ENCODE measurements at regions of chr9 and their contacts with region 1.

Region 1: DNA sequence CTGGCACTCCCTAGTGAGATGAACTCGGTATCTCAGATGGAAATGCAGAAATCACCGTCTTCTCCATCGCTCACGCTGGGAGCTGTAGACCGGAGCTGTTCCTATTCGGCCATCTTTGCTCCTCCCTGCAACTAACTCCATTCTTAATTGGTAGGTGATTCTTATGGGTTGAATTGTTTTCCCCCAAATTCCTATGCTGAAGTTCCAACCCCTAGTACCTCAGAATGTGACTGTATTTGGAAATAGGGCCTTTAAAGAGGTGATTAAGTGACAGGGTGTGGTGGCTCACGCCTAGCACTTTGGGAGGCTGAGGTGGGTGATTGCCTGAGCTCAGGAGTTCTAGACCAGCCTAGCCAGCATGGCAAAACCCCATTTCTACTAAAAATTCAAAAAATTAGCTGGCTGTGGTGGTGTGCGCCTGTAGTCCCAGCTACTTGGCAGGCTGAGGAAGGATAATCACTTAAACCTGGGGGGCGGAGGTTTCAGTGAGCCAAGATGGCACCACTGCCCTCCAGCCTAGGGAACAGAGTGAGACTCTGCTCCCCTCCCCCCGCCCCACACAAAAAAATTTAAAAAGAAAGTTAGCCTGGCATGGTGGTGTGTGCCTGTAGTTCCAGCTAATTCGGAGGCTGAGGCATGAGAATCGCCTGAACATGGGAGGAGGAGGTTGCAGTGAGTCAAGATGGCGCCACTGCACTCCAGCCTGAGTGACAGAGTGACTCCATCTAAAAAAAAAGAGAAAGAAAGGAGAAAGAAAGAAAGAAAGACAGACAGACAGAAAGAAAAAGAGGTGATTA is 25.2 kb upstream of the FOCAD start:
- DNase-seq: no peak
- ATAC-seq: peak; percentile 20
- H3K4me3 ChIP-seq: peak overlapping the region; percentile 27
- H3K4me3 Mint-ChIP-seq: peak overlapping the region in 1 of 10 donors; percentile 85
- H3K27ac ChIP-seq: no peak overlapping the region
- H3K27ac Mint-ChIP-seq: peak overlapping the region in 8 of 9 donors; percentile 69 to 94 (median 84)
- H3K4me1 ChIP-seq: peaks cover 0 to 5% of the 10 kb centered on the region in 2 donors
- H3K4me1 Mint-ChIP-seq: peaks cover 0 to 24% (median 14%) of the 10 kb centered on the region in 7 donors
- H3K27me3 ChIP-seq: no peaks in the 10 kb centered on the region
- H3K27me3 Mint-ChIP-seq: peaks cover 0 to 2% (median 0%) of the 10 kb centered on the region in 5 donors

Region 2: DNA sequence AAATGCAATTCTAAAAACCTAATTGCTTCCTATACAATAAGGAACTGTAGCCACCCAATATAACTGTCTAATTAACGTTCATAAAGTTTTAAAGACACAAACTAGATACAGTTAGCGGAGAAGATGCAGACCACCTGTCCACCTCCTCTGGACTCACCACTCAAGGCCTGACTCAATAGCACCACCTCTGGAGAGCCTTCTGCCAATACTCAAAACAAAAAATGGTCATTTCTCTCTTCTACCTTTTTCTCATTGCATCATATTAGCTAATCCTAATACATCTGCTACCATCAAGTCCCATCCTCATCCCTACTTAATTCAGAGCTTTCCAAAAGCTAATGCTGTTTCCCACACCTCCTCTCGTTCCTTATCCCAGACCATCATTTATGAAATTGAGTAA is 196.5 kb before region 1 on chr9:
- CTCF ChIA-PET with region 1: no interaction called
- POLR2A ChIA-PET with region 1: no interaction called
- intact Hi-C with region 1: no loop called
- DNase-seq: no peak
- ATAC-seq: no peak
- H3K4me3 ChIP-seq: no peak overlapping the region
- H3K4me3 Mint-ChIP-seq: peak overlapping the region in 3 of 10 donors; percentile 16 to 31 (median 17)
- H3K27ac ChIP-seq: no peak overlapping the region
- H3K27ac Mint-ChIP-seq: peak overlapping the region in 1 of 9 donors; percentile 3
- H3K4me1 ChIP-seq: peaks cover 0 to 31% of the 10 kb centered on the region in 2 donors
- H3K4me1 Mint-ChIP-seq: peaks cover 43 to 89% (median 81%) of the 10 kb centered on the region in 7 donors
- H3K27me3 ChIP-seq: no peaks in the 10 kb centered on the region
- H3K27me3 Mint-ChIP-seq: no peaks in the 10 kb centered on the region

Region 3: GRCh38 chr9:20640331-20641187 is 18.3 kb before region 1 on chr9:
- CTCF ChIA-PET with region 1: no interaction called
- POLR2A ChIA-PET with region 1: interaction called, 10 read pairs
- intact Hi-C with region 1: no loop called
- DNase-seq: peak; percentile 44 to 82 (median 76)
- ATAC-seq: peak; percentile 84
- H3K4me3 ChIP-seq: peak overlapping the region; percentile 2
- H3K4me3 Mint-ChIP-seq: peak overlapping the region; percentile 39 to 81 (median 73)
- H3K27ac ChIP-seq: no peak overlapping the region
- H3K27ac Mint-ChIP-seq: peak overlapping the region; percentile 28 to 89 (median 63)
- H3K4me1 ChIP-seq: peaks cover 11 to 15% of the 10 kb centered on the region in 2 donors
- H3K4me1 Mint-ChIP-seq: peaks cover 10 to 26% (median 20%) of the 10 kb centered on the region in 7 donors
- H3K27me3 ChIP-seq: no peaks in the 10 kb centered on the region
- H3K27me3 Mint-ChIP-seq: peaks cover 0 to 22% (median 0%) of the 10 kb centered on the region in 5 donors

Measured in naive thymus-derived CD4-positive, alpha-beta T cell (primary cell).